ENCODE measurements at regions of chr7 and their contacts with region 1.

Region 1: DNA sequence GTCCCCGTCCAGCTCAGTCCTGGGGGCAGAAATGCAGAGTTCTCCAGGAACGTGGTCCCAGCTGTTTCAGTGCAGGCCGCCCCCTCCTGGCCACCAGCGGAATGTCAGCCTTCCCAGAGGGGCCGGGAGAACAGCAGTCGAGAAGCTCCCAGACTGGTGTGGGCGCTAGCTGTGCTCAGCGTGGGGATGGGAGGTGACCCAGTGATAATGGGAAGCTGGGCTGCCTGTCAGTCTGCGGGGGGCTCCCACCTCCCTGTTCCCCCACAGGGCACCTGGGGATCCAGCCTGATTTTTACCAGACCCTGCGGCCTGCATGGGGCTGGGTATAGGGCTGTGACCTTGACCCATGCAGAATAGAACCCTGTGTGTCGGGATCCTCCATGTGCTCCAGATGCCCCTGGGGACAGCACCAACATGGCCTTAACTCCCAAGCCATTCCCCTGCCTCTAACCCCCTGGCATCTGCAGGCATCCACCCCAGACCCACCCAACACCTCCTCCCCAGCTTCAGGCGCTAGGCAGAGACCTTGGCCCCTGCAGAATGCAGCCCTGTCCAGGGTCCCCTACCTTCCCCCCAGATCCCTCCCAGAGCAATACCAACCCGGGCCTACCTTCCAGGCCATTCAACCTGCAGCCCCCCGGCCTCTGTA is 946 bp upstream of the ELN start:
- DNase-seq: peak; percentile 92
- H3K4me3 ChIP-seq: peak overlapping the region in 3 of 4 donors; percentile 60 to 74 (median 65)
- H3K27ac ChIP-seq: peak overlapping the region; percentile 90 to 96 (median 90)
- H3K4me1 ChIP-seq: peaks cover 0 to 83% (median 80%) of the 10 kb centered on the region in 4 donors
- H3K27me3 ChIP-seq: no peaks in the 10 kb centered on the region
- CTCF ChIP-seq: peak; percentile 91 to 99 (median 96)
- EP300 ChIP-seq: no peak
- POLR2A ChIP-seq: no peak

Region 2: GRCh38 chr7:73865738-73866445 is 161.1 kb before region 1 on chr7:
- intact Hi-C with region 1: loop called (anchors 2 kb)
- DNase-seq: no peak
- H3K4me3 ChIP-seq: no peak overlapping the region
- H3K27ac ChIP-seq: no peak overlapping the region
- H3K4me1 ChIP-seq: peaks cover 0 to 25% (median 19%) of the 10 kb centered on the region in 4 donors
- H3K27me3 ChIP-seq: no peaks in the 10 kb centered on the region
- CTCF ChIP-seq: peak; percentile 23 to 68 (median 61)
- EP300 ChIP-seq: no peak
- POLR2A ChIP-seq: no peak

Region 3: GRCh38 chr7:73885975-73886798 is 140.8 kb before region 1 on chr7:
- intact Hi-C with region 1: loop called (anchors 5 kb)
- DNase-seq: peak; percentile 91
- H3K4me3 ChIP-seq: no peak overlapping the region
- H3K27ac ChIP-seq: peak overlapping the region; percentile 75 to 84 (median 79)
- H3K4me1 ChIP-seq: peaks cover 0 to 21% (median 17%) of the 10 kb centered on the region in 4 donors
- H3K27me3 ChIP-seq: no peaks in the 10 kb centered on the region
- CTCF ChIP-seq: no peak
- EP300 ChIP-seq: no peak
- POLR2A ChIP-seq: no peak